ENCODE measurements at regions of chr1 and their contacts with region 1.

Region 1: DNA sequence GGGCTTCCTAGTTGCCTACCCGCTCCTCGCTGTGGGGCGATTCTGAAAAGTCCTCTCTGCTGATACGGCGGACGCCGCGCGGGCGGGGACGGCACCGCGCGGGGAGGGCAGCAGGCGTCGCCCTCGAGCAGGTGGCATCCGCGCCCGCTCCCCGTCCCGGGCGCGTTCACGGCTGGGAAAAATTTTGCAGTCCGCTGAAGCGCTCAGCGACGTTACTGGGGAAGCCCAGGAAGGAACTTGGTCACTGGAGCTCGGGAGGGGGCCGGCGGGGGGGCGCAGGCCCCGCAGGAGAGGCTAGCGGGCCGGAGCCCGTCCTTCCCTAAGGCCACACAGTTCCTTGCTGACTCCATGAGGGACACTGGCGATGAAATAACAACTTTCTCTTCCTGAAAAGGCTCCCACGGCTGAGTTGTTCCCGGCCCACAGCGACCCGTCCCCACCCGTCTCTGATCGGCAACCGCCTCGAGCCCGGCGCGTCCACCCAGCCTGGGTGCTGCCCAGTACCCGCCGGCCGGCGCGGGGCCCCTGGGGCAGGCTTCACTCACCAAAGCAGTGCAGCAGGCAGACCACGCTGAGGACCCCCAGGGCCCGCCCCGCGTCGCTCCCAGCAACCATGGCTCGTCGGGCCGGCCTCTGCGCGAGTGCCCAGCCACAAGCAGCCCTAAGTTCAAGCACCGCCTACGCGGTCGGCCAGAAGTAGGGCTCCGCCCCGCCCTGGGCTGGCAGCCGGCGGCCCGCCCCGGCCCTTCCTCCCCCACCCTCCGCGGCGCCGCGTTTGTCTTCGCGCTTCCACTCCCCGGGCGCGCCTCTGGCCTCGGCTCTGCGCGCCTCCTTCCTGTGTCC is at the start of gene CD58:
- DNase-seq: peak; percentile 97
- total RNA-seq, gene CD58: 28.3 to 31.6 TPM

Region 2: GRCh38 chr1:116372587-116373444 is 197.8 kb before region 1 on chr1 and contains the start of gene ATP1A1:
- intact Hi-C with region 1: loop called in 1 of 2 experiments (anchors 10 kb)
- DNase-seq: peak; percentile 99
- total RNA-seq, gene ATP1A1: 227 to 248 TPM

Region 3: GRCh38 chr1:116605315-116605714 is 34.7 kb after region 1 on chr1:
- intact Hi-C with region 1: no loop called
- DNase-seq: no peak